ENCODE measurements at regions of chr16 and their contacts with region 1.

Region 1: DNA sequence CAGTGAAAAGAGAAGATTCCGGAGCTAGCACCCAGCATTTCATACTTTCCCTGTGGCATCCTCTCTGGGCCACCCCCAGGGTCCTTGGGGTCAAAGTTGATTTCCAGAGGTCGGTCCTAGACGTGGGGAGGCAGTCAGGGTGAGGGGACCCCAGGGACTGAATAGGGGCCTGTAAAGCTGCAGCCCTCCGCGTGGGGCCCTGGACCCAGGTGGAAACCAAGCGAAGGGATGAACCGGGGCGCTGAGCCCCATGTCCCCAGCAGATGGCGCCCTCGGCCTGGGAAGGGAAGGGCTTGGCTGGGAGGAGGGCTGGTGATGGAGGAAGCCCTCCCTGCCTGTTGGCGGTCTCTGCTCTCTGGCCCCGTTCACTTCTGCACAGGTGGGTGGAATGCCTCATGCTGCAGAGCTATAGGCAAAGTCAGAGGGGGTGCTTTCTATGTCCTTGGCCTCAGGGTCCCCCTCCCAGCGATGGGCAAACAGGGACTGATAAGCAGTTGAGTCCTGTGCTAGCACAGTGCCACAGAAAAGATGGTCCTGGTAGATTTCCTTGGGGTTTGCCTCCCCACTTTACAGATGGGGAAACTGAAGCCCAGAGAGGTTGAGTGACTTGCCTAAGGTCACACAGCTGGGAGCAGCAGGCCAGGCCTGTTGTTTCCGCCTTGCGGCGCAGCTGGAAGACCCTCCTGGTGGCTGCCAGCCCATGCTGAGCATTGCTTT is 163.4 kb upstream of the CIBAR2 start:
- DNase-seq: peak; percentile 70
- H3K4me3 Mint-ChIP-seq: no peak overlapping the region
- H3K27ac Mint-ChIP-seq: no peak overlapping the region
- H3K4me1 Mint-ChIP-seq: no peaks in the 10 kb centered on the region
- H3K27me3 Mint-ChIP-seq: no peaks in the 10 kb centered on the region
- CTCF ChIP-seq: peak; percentile 89

Region 2: DNA sequence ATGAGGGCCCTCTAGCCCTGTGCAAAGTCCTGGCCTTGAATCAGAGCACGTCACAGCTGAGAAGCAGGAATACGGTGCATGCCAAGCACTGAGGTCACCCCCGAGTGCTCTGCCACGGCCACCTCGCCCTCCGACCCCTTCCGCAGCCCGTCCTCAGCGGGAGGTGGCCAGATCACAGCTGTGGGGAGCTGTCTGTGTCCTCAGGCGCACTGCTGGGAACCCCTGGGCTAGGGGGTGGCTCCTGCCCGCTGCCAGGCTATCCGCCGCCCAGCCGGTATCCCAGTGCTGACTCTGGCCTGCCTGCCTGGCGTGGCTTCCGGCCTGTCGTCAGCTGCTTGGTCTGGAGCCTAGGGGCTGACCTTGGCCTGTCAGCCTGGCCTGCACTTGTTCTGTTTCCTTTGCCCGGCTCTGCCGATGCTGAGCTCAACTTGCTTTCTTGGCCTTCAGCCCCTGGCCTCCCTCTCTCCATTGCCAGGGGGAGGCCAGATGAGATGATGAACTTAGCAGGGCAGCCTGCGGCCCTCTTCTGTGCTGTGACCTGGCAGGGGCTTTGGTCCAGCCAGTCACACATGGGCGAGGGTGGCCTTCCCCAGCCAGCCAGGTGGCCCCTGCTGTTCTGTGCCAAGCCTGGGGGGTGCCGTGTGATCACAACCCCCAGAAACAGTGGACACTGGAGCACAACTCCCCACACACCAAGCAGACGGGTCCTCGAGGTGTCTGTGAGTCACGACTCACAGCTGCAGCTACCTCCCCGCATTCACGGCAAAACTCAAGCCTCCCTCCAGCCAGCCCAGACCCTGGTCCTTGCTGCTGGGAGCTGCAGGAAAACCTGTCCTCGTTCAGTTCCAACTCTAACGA is 341.7 kb before region 1 on chr16:
- CTCF ChIA-PET with region 1: no interaction called
- POLR2A ChIA-PET with region 1: no interaction called
- intact Hi-C with region 1: no loop called
- DNase-seq: no peak
- H3K4me3 Mint-ChIP-seq: no peak overlapping the region
- H3K27ac Mint-ChIP-seq: no peak overlapping the region
- H3K4me1 Mint-ChIP-seq: peaks cover 6% of the 10 kb centered on the region
- H3K27me3 Mint-ChIP-seq: no peaks in the 10 kb centered on the region
- CTCF ChIP-seq: no peak

Region 3: GRCh38 chr16:85157372-85157771 is 118.3 kb before region 1 on chr16:
- CTCF ChIA-PET with region 1: no interaction called
- POLR2A ChIA-PET with region 1: no interaction called
- intact Hi-C with region 1: no loop called
- DNase-seq: no peak
- H3K4me3 Mint-ChIP-seq: no peak overlapping the region
- H3K27ac Mint-ChIP-seq: peak overlapping the region; percentile 24
- H3K4me1 Mint-ChIP-seq: peaks cover 9% of the 10 kb centered on the region
- H3K27me3 Mint-ChIP-seq: peaks cover 23% of the 10 kb centered on the region
- CTCF ChIP-seq: no peak

Region 4: DNA sequence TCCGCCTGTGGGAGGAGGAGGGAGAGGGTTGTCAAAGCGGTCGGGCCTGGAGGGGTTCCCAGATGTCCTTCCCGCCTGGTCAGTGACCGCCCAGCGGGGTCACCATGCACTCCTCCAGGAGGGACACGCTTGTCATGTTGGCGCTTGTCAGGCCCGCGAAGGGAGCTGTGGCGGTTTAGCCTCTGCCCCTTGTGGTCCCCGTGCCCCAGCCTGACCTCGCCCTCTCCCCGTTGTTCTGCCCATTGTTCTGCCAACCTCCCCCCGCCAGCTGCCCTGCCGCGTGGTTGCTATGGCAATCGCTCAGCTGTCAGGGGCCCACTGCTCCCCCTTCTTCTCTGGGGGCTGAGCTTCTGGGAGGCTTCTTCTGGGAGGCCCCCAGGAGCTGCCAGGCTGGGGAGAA is 17.1 kb before region 1 on chr16:
- CTCF ChIA-PET with region 1: interaction called, 18 read pairs
- POLR2A ChIA-PET with region 1: no interaction called
- intact Hi-C with region 1: no loop called
- DNase-seq: no peak
- H3K4me3 Mint-ChIP-seq: no peak overlapping the region
- H3K27ac Mint-ChIP-seq: no peak overlapping the region
- H3K4me1 Mint-ChIP-seq: no peaks in the 10 kb centered on the region
- H3K27me3 Mint-ChIP-seq: no peaks in the 10 kb centered on the region
- CTCF ChIP-seq: no peak

Region 5: GRCh38 chr16:85330694-85331188 is 55.0 kb after region 1 on chr16:
- CTCF ChIA-PET with region 1: interaction called, 5 read pairs
- POLR2A ChIA-PET with region 1: no interaction called
- intact Hi-C with region 1: loop called (anchors 2 kb)
- DNase-seq: peak; percentile 79
- H3K4me3 Mint-ChIP-seq: no peak overlapping the region
- H3K27ac Mint-ChIP-seq: no peak overlapping the region
- H3K4me1 Mint-ChIP-seq: peaks cover 6% of the 10 kb centered on the region
- H3K27me3 Mint-ChIP-seq: no peaks in the 10 kb centered on the region
- CTCF ChIP-seq: peak; percentile 30

Region 6: DNA sequence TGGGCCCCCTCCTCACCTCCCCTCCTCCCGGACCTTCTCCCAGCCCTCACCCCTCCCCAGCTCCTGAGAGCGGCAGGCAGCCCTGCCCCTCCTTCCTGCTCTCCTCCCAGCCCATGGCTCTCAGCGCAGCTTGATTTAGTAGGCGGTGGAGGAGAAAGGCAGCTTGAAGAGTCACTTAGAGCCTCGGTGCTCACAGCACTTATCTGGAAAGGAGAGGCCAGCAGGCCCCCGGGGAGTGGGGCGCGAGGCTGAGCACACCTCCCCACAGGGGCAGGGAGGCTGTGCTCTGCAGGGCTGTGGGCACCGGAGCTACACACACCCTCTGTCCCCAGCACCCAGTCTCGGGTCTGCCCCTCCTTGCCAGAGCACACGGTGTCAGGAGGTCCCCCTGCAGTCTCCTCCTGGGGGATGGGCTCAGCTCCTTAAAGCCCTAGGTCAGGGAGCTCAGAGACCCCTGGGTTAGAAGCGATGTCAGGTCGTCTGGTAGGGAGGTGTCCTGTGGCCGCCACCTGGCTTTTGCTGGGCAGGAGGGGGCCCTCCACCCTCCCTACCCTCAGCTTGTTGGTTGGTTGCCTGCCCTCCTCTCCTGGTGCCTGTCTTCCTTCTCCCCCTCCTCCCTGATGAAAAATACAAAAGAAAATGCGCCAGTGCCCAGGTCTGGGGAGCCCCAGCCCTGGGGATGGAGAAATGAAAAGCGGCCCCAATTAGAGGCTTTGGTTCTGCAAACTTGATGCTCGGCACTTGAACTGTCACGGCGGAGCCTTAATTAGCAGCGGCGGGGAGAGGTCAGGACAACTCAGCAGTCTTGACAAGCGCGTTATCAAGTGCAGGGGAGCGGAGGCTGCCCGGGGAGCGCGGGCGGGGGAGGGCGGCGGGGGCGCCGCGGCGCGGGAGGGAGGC is 186.4 kb after region 1 on chr16:
- CTCF ChIA-PET with region 1: no interaction called
- POLR2A ChIA-PET with region 1: no interaction called
- intact Hi-C with region 1: no loop called
- DNase-seq: no peak
- H3K4me3 Mint-ChIP-seq: no peak overlapping the region
- H3K27ac Mint-ChIP-seq: no peak overlapping the region
- H3K4me1 Mint-ChIP-seq: peaks cover 8% of the 10 kb centered on the region
- H3K27me3 Mint-ChIP-seq: peaks cover 12% of the 10 kb centered on the region
- CTCF ChIP-seq: no peak

Region 7: DNA sequence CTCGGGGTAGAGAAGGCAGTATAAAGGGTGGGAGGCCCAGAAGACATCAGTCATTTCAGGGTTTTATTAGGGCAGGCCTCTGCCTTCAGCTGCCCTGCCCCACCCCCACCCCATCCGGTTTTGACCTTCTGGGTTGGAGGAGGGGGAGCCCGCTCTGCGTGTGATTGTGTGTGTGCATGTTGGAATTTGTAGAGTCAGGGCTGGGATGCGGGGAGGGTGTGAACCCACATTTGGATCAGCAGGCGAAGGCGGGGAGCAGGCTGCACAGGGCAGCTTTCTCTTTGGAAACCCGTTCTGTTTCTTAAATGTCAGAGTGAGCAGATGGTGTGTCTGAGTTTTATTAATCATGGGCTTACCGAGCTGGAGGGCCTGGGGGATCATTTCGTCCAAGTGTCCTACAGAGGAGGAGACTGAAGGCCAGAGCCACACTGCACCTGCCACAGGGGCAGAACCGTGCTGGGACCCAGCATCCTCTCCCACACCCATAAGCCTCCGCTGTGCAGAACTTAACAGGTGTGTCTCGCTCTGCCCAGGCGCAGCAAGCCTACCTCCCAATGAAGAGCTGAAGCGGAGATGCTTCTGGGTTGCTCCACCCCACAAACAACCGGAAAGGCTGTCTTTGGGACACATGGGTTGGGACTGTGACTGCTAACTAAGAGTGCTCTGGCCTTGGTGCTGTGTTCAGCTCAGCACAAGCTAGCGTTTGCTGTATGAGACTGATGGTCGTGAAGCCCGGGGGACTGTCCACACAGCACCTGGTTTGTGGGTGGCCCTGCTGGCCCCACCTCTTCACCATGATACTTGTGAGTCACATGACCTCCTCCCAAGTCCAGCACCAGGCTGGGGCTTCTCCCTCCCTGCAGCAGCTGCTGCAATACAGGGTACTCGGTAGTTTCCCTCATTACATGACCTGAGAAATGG is 266.5 kb after region 1 on chr16:
- CTCF ChIA-PET with region 1: no interaction called
- POLR2A ChIA-PET with region 1: no interaction called
- intact Hi-C with region 1: no loop called
- DNase-seq: no peak
- H3K4me3 Mint-ChIP-seq: no peak overlapping the region
- H3K27ac Mint-ChIP-seq: no peak overlapping the region
- H3K4me1 Mint-ChIP-seq: no peaks in the 10 kb centered on the region
- H3K27me3 Mint-ChIP-seq: no peaks in the 10 kb centered on the region
- CTCF ChIP-seq: no peak

Region 8: GRCh38 chr16:85615852-85616606 is 340.3 kb after region 1 on chr16:
- CTCF ChIA-PET with region 1: interaction called, 41 read pairs
- POLR2A ChIA-PET with region 1: no interaction called
- intact Hi-C with region 1: no loop called
- DNase-seq: peak; percentile 57
- H3K4me3 Mint-ChIP-seq: peak overlapping the region; percentile 76
- H3K27ac Mint-ChIP-seq: no peak overlapping the region
- H3K4me1 Mint-ChIP-seq: peaks cover 4% of the 10 kb centered on the region
- H3K27me3 Mint-ChIP-seq: no peaks in the 10 kb centered on the region
- CTCF ChIP-seq: peak; percentile 76